Esophagus muscularis mucosa (tissue), 4 donors: ENCODE measurements at regions of chr17 and their contacts with region 1.

Region 1: DNA sequence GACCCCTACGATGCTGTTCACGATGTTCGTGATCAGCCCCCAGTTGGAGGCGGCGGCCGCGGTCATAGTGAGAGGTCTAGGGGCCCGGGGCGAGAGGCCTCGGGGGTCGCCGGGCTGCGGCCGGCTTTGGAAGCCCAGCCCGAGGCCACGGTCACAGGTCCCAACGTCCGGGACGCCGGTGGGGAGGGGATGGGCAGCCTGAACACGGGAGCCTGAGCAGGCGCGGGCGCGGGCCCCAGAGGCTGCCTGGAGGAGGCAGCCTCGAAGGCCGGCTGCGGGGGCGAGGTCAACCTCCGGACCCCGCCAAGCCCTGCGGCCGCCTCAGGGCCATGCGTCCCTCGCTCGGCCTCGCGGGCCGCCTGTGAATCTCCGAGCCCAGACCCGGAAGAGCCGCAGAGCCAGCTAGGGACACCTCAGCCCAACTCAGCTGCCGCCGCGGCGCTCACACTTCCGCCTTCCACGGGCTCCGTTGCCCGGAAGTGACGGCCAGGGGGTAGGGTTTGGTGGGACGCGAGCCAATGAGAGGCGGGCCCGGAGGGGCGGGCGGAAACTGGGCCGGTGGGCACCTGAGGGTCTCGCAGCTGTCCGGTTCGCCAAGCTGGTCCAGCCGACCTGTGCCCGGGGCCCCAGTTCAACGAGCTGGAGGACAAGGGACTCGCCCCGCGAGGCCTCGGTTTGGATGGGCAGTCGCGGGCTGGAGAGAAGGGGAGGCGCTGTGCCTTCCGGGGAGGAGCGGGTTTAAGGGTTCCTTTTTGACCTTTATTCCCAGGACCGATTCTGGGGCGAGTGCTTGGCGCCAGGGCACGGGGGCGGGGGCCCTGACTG is at the start of gene SLC38A10:
- DNase-seq: peak; percentile 97
- H3K4me3 ChIP-seq: peak within 1 kb of the TSS; percentile 75 to 98 (median 87)
- H3K27ac ChIP-seq: peak within 1 kb of the TSS; percentile 94 to 98 (median 94)
- H3K4me1 ChIP-seq: peaks cover 37 to 49% (median 46%) of the 10 kb centered on the region in 4 donors
- H3K27me3 ChIP-seq: no peaks in the 10 kb centered on the region
- CTCF ChIP-seq: peak in 2 of 3 experiments; percentile 28 to 41
- EP300 ChIP-seq: no peak
- POLR2A ChIP-seq: peak; percentile 98
- total RNA-seq, gene SLC38A10: 78.0 to 103 (median 93.4) TPM

Region 2: GRCh38 chr17:79942591-79943346 is 1352.3 kb before region 1 on chr17:
- intact Hi-C with region 1: no loop called
- DNase-seq: no peak
- H3K4me3 ChIP-seq: no peak overlapping the region
- H3K27ac ChIP-seq: no peak overlapping the region
- H3K4me1 ChIP-seq: peaks cover 0 to under 1% (median 0%) of the 10 kb centered on the region in 4 donors
- H3K27me3 ChIP-seq: no peaks in the 10 kb centered on the region
- CTCF ChIP-seq: no peak
- EP300 ChIP-seq: no peak
- POLR2A ChIP-seq: no peak

Region 3: GRCh38 chr17:81135503-81136278 is 159.4 kb before region 1 on chr17:
- intact Hi-C with region 1: no loop called
- DNase-seq: no peak
- H3K4me3 ChIP-seq: no peak overlapping the region
- H3K27ac ChIP-seq: no peak overlapping the region
- H3K4me1 ChIP-seq: peaks cover 0 to 9% (median 1%) of the 10 kb centered on the region in 4 donors
- H3K27me3 ChIP-seq: no peaks in the 10 kb centered on the region
- CTCF ChIP-seq: no peak
- EP300 ChIP-seq: no peak
- POLR2A ChIP-seq: no peak

Region 4: GRCh38 chr17:81253358-81254131 is 41.5 kb before region 1 on chr17:
- intact Hi-C with region 1: loop called (anchors 5 kb)
- DNase-seq: no peak
- H3K4me3 ChIP-seq: no peak overlapping the region
- H3K27ac ChIP-seq: peak overlapping the region; percentile 85 to 91 (median 88)
- H3K4me1 ChIP-seq: peaks cover 14 to 57% (median 47%) of the 10 kb centered on the region in 4 donors
- H3K27me3 ChIP-seq: no peaks in the 10 kb centered on the region
- CTCF ChIP-seq: peak; percentile 88 to 92 (median 90)
- EP300 ChIP-seq: no peak
- POLR2A ChIP-seq: no peak

Region 5: DNA sequence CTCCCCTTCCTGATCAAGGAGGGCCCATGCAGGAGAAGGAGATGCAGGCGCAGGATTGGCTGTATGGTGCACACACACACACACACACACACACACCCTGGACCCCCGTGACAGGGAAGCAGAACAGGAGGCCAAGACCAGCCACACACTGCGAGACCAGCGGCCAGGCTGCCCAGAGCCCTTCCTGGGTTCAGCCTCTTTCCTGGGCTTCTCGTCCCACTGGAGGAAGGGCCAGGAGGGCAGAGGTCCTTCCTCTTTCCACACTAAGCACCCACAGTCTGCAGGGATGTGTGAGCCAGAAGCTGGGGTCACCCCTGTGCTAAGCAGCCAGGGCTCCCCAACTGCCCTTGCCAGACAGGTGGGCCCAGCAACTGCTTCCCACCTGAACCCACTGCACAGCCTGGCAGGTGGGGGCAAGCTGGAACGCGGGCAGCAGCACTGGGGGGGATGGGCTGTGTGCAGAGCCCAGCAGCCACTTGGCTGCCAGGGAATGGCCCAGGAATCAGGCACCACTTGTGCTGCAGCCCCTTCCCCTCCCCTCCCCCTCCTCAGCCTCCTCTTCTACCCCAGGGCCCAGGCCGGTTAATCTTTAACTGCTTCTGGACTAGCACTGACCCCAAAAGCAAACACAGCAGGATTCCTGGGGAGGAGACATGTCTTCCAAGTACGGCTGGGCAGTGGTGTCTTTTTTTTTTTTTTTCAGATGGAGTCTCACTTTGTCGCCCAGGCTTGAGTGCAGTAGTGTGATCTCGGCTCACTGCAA is 44.6 kb after region 1 on chr17:
- intact Hi-C with region 1: loop called (anchors 5 kb)
- DNase-seq: no peak
- H3K4me3 ChIP-seq: no peak overlapping the region
- H3K27ac ChIP-seq: peak overlapping the region; percentile 91 to 99 (median 96)
- H3K4me1 ChIP-seq: peaks cover 43 to 88% (median 82%) of the 10 kb centered on the region in 4 donors
- H3K27me3 ChIP-seq: no peaks in the 10 kb centered on the region
- CTCF ChIP-seq: no peak
- EP300 ChIP-seq: no peak
- POLR2A ChIP-seq: no peak

Region 6: GRCh38 chr17:81394921-81395599 is 100.0 kb after region 1 on chr17 and contains the start of gene BAHCC1:
- intact Hi-C with region 1: loop called (anchors 5 kb)
- DNase-seq: peak; percentile 100
- H3K4me3 ChIP-seq: peak within 1 kb of the TSS; percentile 79 to 95 (median 90)
- H3K27ac ChIP-seq: peak within 1 kb of the TSS; percentile 96 to 100 (median 99)
- H3K4me1 ChIP-seq: peaks cover 34 to 60% (median 58%) of the 10 kb centered on the region in 4 donors
- H3K27me3 ChIP-seq: no peaks in the 10 kb centered on the region
- CTCF ChIP-seq: peak in 1 of 3 experiments; percentile 11
- EP300 ChIP-seq: no peak
- POLR2A ChIP-seq: peak; percentile 85
- total RNA-seq, gene BAHCC1: 15.9 to 38.1 (median 21.1) TPM

Region 7: GRCh38 chr17:81484195-81484979 is 189.3 kb after region 1 on chr17:
- intact Hi-C with region 1: loop called (anchors 5 kb)
- DNase-seq: peak; percentile 93
- H3K4me3 ChIP-seq: peak overlapping the region; percentile 46 to 61 (median 49)
- H3K27ac ChIP-seq: no peak overlapping the region
- H3K4me1 ChIP-seq: peaks cover 56 to 75% (median 71%) of the 10 kb centered on the region in 4 donors
- H3K27me3 ChIP-seq: peaks cover 0 to 4% (median 0%) of the 10 kb centered on the region in 4 donors
- CTCF ChIP-seq: peak; percentile 100
- EP300 ChIP-seq: no peak
- POLR2A ChIP-seq: no peak